ENCODE measurements at regions of chr10 and their contacts with region 1.

Region 1: GRCh38 chr10:105691811-105692210 is 1050.7 kb downstream of the SORCS3 start:
- DNase-seq: peak; percentile 56
- H3K4me3 Mint-ChIP-seq: no peak overlapping the region
- H3K27ac Mint-ChIP-seq: no peak overlapping the region
- H3K4me1 Mint-ChIP-seq: no peaks in the 10 kb centered on the region
- H3K27me3 Mint-ChIP-seq: no peaks in the 10 kb centered on the region
- CTCF ChIP-seq: peak; percentile 38

Region 2: GRCh38 chr10:104642658-104643302 is 1049.0 kb before region 1 on chr10:
- CTCF ChIA-PET with region 1: interaction called, 3 read pairs
- POLR2A ChIA-PET with region 1: no interaction called
- intact Hi-C with region 1: loop called (anchors 10 kb)
- DNase-seq: peak; percentile 64
- H3K4me3 Mint-ChIP-seq: peak overlapping the region; percentile 65
- H3K27ac Mint-ChIP-seq: no peak overlapping the region
- H3K4me1 Mint-ChIP-seq: peaks cover 7% of the 10 kb centered on the region
- H3K27me3 Mint-ChIP-seq: peaks cover 57% of the 10 kb centered on the region
- CTCF ChIP-seq: peak; percentile 48

Region 3: DNA sequence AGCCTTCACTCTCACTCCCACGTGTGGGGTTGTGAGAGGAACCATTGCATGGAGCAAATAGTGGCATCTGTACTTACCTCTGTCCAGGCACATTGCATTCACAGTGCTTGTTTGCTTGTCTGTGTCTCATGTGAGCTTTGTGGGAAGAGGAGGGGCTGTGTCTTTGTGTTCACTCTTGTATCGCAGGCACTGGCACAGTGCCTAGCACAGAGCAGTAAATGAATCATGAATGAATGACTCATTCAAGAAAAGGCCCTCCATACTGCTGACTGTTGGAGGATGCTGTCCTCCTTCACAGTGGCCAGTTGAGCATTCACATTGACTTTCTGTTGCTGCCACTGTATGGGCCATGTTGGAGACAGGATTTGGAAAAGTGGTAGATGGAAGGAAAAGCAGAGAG is 925.5 kb before region 1 on chr10:
- CTCF ChIA-PET with region 1: interaction called, 3 read pairs
- POLR2A ChIA-PET with region 1: no interaction called
- intact Hi-C with region 1: loop called (anchors 5 kb)
- DNase-seq: peak; percentile 92
- H3K4me3 Mint-ChIP-seq: no peak overlapping the region
- H3K27ac Mint-ChIP-seq: peak overlapping the region; percentile 28
- H3K4me1 Mint-ChIP-seq: peaks cover 17% of the 10 kb centered on the region
- H3K27me3 Mint-ChIP-seq: no peaks in the 10 kb centered on the region
- CTCF ChIP-seq: no peak

Region 4: GRCh38 chr10:105063796-105064195 is 628.0 kb before region 1 on chr10:
- CTCF ChIA-PET with region 1: interaction called, 16 read pairs
- POLR2A ChIA-PET with region 1: no interaction called
- intact Hi-C with region 1: loop called (anchors 1 kb)
- DNase-seq: peak; percentile 56
- H3K4me3 Mint-ChIP-seq: no peak overlapping the region
- H3K27ac Mint-ChIP-seq: no peak overlapping the region
- H3K4me1 Mint-ChIP-seq: no peaks in the 10 kb centered on the region
- H3K27me3 Mint-ChIP-seq: no peaks in the 10 kb centered on the region
- CTCF ChIP-seq: peak; percentile 76

Region 5: GRCh38 chr10:105807935-105808587 is 116.2 kb after region 1 on chr10:
- CTCF ChIA-PET with region 1: no interaction called
- POLR2A ChIA-PET with region 1: no interaction called
- intact Hi-C with region 1: no loop called
- DNase-seq: no peak
- H3K4me3 Mint-ChIP-seq: no peak overlapping the region
- H3K27ac Mint-ChIP-seq: no peak overlapping the region
- H3K4me1 Mint-ChIP-seq: no peaks in the 10 kb centered on the region
- H3K27me3 Mint-ChIP-seq: no peaks in the 10 kb centered on the region
- CTCF ChIP-seq: no peak